ENCODE measurements at regions of chr2 and their contacts with region 1.

Region 1: GRCh38 chr2:101717071-101717845 is 19.8 kb downstream of the MAP4K4 start:
- DNase-seq: peak; percentile 61 to 79 (median 68)
- H3K4me3 ChIP-seq: peak overlapping the region in 1 of 2 donors; percentile 17
- H3K4me3 Mint-ChIP-seq: peak overlapping the region; percentile 50 to 79 (median 72)
- H3K27ac ChIP-seq: peak overlapping the region; percentile 67
- H3K27ac Mint-ChIP-seq: peak overlapping the region; percentile 82 to 96 (median 93)
- H3K4me1 ChIP-seq: peaks cover 98% of the 10 kb centered on the region
- H3K4me1 Mint-ChIP-seq: peaks cover 60 to 87% (median 71%) of the 10 kb centered on the region in 4 donors
- H3K27me3 ChIP-seq: no peaks in the 10 kb centered on the region
- H3K27me3 Mint-ChIP-seq: no peaks in the 10 kb centered on the region

Region 2: GRCh38 chr2:101308432-101309210 is 408.6 kb before region 1 on chr2 and contains the start of gene RNF149:
- CTCF ChIA-PET with region 1: no interaction called
- POLR2A ChIA-PET with region 1: interaction called, 12 read pairs
- intact Hi-C with region 1: no loop called
- DNase-seq: peak; percentile 89 to 92 (median 90)
- H3K4me3 ChIP-seq: peak within 1 kb of the TSS; percentile 68 to 92
- H3K4me3 Mint-ChIP-seq: peak within 1 kb of the TSS; percentile 93 to 100 (median 100)
- H3K27ac ChIP-seq: peak within 1 kb of the TSS; percentile 86
- H3K27ac Mint-ChIP-seq: peak within 1 kb of the TSS; percentile 96 to 100 (median 99)
- H3K4me1 ChIP-seq: peaks cover 72% of the 10 kb centered on the region
- H3K4me1 Mint-ChIP-seq: peaks cover 53 to 95% (median 67%) of the 10 kb centered on the region in 4 donors
- H3K27me3 ChIP-seq: no peaks in the 10 kb centered on the region
- H3K27me3 Mint-ChIP-seq: no peaks in the 10 kb centered on the region
- total RNA-seq, gene RNF149: 138 to 154 TPM

Region 3: DNA sequence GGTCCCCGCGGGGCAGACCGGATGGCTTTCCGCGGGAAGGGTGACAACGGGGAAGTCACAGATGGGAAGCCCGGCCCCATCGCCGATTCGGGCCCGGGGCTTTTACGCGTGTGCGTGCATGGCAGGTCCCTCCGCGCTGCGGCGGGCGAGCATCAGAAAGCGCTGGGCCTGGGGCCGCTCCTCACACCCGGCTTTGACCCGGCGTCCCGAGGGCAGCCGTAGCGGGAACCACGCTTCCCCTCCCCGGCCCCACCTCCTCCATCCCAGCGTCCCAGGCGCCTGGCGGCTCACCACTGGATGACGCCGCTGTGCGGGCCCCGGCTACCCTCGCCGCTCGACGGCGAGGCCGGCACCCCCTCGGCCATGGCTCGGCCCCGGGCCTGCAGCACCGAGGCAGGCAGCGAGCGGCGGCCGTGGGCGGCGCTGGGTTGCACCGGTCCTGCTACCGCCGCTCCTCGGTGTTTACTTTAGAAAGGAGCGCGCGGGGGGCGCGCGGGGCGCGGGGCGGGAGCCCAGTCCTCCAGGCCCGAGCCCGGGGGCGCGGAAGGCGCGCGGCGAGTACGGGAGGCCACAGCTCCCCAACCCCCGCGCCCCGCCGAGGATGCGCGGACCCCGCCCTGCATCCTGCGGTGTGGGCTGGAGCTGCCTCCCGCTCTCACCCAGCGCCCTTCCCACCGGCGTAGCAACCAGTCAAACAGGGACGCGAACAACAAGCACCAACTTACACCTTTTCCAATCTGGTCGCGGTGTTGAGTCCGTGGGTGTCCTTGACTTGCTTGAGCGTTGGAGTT is 243.2 kb before region 1 on chr2:
- CTCF ChIA-PET with region 1: no interaction called
- POLR2A ChIA-PET with region 1: interaction called, 3 read pairs
- intact Hi-C with region 1: loop called (anchors 5 kb)
- DNase-seq: peak in 4 of 5 donors; percentile 23 to 39 (median 36)
- H3K4me3 ChIP-seq: peak overlapping the region; percentile 26 to 63
- H3K4me3 Mint-ChIP-seq: peak overlapping the region; percentile 82 to 94 (median 89)
- H3K27ac ChIP-seq: no peak overlapping the region
- H3K27ac Mint-ChIP-seq: peak overlapping the region in 4 of 7 donors; percentile 35 to 84 (median 62)
- H3K4me1 ChIP-seq: peaks cover 17% of the 10 kb centered on the region
- H3K4me1 Mint-ChIP-seq: peaks cover 5 to 12% (median 7%) of the 10 kb centered on the region in 4 donors
- H3K27me3 ChIP-seq: no peaks in the 10 kb centered on the region
- H3K27me3 Mint-ChIP-seq: no peaks in the 10 kb centered on the region

Region 4: DNA sequence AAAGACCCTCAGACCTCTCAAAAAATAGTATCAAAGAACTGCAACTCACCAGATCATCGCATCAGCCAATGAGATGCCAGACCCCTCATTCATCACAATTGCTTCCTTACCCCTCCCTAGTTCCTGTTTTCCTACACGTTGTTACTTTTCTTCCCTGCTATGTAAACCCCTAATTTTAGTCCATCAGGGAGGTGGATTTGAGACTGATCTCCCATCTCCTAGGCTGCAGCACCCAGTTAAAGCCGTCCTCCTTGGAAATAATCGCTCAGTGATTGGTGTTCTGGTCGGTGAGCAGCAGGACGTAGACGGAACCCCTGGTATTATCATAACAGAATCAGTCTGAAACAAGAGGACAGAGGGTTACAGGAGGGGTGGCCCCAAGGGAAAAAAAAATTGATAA is 63.8 kb before region 1 on chr2:
- CTCF ChIA-PET with region 1: no interaction called
- POLR2A ChIA-PET with region 1: no interaction called
- intact Hi-C with region 1: loop called (anchors 5 kb)
- DNase-seq: no peak
- H3K4me3 ChIP-seq: no peak overlapping the region
- H3K4me3 Mint-ChIP-seq: no peak overlapping the region
- H3K27ac ChIP-seq: no peak overlapping the region
- H3K27ac Mint-ChIP-seq: peak overlapping the region in 4 of 7 donors; percentile 1 to 59 (median 28)
- H3K4me1 ChIP-seq: peaks cover 23% of the 10 kb centered on the region
- H3K4me1 Mint-ChIP-seq: peaks cover 14 to 32% (median 20%) of the 10 kb centered on the region in 4 donors
- H3K27me3 ChIP-seq: no peaks in the 10 kb centered on the region
- H3K27me3 Mint-ChIP-seq: no peaks in the 10 kb centered on the region

Region 5: GRCh38 chr2:101704046-101704466 is 13.2 kb before region 1 on chr2:
- CTCF ChIA-PET with region 1: interaction called, 37 read pairs
- POLR2A ChIA-PET with region 1: interaction called, 171 read pairs
- intact Hi-C with region 1: loop called (anchors 1 kb)
- DNase-seq: peak in 3 of 5 donors; percentile 44 to 45 (median 44)
- H3K4me3 ChIP-seq: no peak overlapping the region
- H3K4me3 Mint-ChIP-seq: peak overlapping the region; percentile 64 to 94 (median 90)
- H3K27ac ChIP-seq: peak overlapping the region; percentile 58
- H3K27ac Mint-ChIP-seq: peak overlapping the region; percentile 90 to 99 (median 96)
- H3K4me1 ChIP-seq: peaks cover 95% of the 10 kb centered on the region
- H3K4me1 Mint-ChIP-seq: peaks cover 12 to 67% (median 54%) of the 10 kb centered on the region in 4 donors
- H3K27me3 ChIP-seq: no peaks in the 10 kb centered on the region
- H3K27me3 Mint-ChIP-seq: no peaks in the 10 kb centered on the region

Region 6: GRCh38 chr2:101823347-101823791 is 106.1 kb after region 1 on chr2:
- CTCF ChIA-PET with region 1: interaction called, 13 read pairs
- POLR2A ChIA-PET with region 1: interaction called, 5 read pairs
- intact Hi-C with region 1: no loop called
- DNase-seq: peak; percentile 62 to 82 (median 67)
- H3K4me3 ChIP-seq: no peak overlapping the region
- H3K4me3 Mint-ChIP-seq: peak overlapping the region in 7 of 8 donors; percentile 13 to 69 (median 48)
- H3K27ac ChIP-seq: no peak overlapping the region
- H3K27ac Mint-ChIP-seq: peak overlapping the region; percentile 66 to 90 (median 83)
- H3K4me1 ChIP-seq: peaks cover 67% of the 10 kb centered on the region
- H3K4me1 Mint-ChIP-seq: peaks cover 45 to 87% (median 66%) of the 10 kb centered on the region in 4 donors
- H3K27me3 ChIP-seq: no peaks in the 10 kb centered on the region
- H3K27me3 Mint-ChIP-seq: no peaks in the 10 kb centered on the region